ENCODE measurements at regions of chr1 and their contacts with region 1.

Region 1: GRCh38 chr1:24659993-24660665 is 17.0 kb downstream of the SRRM1 start:
- DNase-seq: no peak
- H3K4me3 ChIP-seq: no peak overlapping the region
- H3K27ac ChIP-seq: no peak overlapping the region
- H3K4me1 ChIP-seq: peaks cover 13% of the 10 kb centered on the region
- H3K27me3 ChIP-seq: no peaks in the 10 kb centered on the region
- CTCF ChIP-seq: no peak
- POLR2A ChIP-seq: no peak

Region 2: DNA sequence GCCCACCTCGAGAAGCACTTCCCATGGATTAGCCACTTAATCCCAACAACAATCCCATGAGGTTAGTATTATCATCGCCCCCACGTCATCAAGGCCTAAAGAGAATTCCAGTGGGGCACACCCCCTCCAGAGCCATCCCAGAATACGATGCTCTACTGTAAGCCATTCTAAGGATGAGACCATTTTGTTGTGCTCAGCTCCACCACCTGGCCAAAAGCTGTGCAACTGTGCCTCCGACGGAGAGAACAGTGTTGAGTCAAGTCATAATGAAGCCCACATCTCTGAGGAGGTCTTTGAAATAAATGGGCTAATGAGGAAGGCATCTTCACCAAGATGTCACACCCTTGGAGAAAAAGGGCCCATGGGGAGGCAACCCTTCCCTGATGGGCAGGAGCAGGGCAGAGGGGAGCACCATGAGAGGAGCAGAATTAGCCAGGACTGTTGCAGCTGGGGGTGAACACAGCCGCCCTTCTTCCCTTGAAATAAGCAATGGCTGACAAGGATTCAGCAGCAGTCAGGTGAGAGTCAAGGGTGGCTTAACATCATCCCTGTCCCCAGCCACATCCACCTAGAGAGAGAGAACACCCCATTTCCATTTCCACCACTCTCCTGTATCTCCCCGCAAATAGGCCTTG is 557.6 kb after region 1 on chr1:
- intact Hi-C with region 1: loop called (anchors 10 kb)
- DNase-seq: no peak
- H3K4me3 ChIP-seq: no peak overlapping the region
- H3K27ac ChIP-seq: no peak overlapping the region
- H3K4me1 ChIP-seq: no peaks in the 10 kb centered on the region
- H3K27me3 ChIP-seq: no peaks in the 10 kb centered on the region
- CTCF ChIP-seq: no peak
- POLR2A ChIP-seq: no peak

Measured in prostate gland (tissue), 2 donors.